MCF 10A (cell line): ENCODE measurements at regions of chr20 and their contacts with region 1.

Region 1: GRCh38 chr20:35741892-35742740 is at the start of gene RBM39:
- DNase-seq: peak; percentile 100
- H3K4me3 Mint-ChIP-seq: peak within 1 kb of the TSS; percentile 97
- H3K27ac Mint-ChIP-seq: peak within 1 kb of the TSS; percentile 98
- H3K4me1 Mint-ChIP-seq: peaks cover 23% of the 10 kb centered on the region
- H3K27me3 Mint-ChIP-seq: no peaks in the 10 kb centered on the region
- CTCF ChIP-seq: peak; percentile 14
- total RNA-seq, gene RBM39: 380 and 438 TPM in 2 replicates

Region 2: GRCh38 chr20:34643919-34644318 is 1098.2 kb before region 1 on chr20:
- CTCF ChIA-PET with region 1: no interaction called
- POLR2A ChIA-PET with region 1: no interaction called
- intact Hi-C with region 1: no loop called
- DNase-seq: peak; percentile 68
- H3K4me3 Mint-ChIP-seq: no peak overlapping the region
- H3K27ac Mint-ChIP-seq: no peak overlapping the region
- H3K4me1 Mint-ChIP-seq: peaks cover 5% of the 10 kb centered on the region
- H3K27me3 Mint-ChIP-seq: no peaks in the 10 kb centered on the region
- CTCF ChIP-seq: no peak

Region 3: GRCh38 chr20:35699127-35699975 is 42.8 kb before region 1 on chr20 and contains the starts of genes NFS1 and ROMO1:
- CTCF ChIA-PET with region 1: no interaction called
- POLR2A ChIA-PET with region 1: interaction called, 266 read pairs
- intact Hi-C with region 1: no loop called
- DNase-seq: peak; percentile 85
- H3K4me3 Mint-ChIP-seq: peak within 1 kb of the TSS; percentile 98
- H3K27ac Mint-ChIP-seq: peak within 1 kb of the TSS; percentile 99
- H3K4me1 Mint-ChIP-seq: peaks cover 19% of the 10 kb centered on the region
- H3K27me3 Mint-ChIP-seq: no peaks in the 10 kb centered on the region
- CTCF ChIP-seq: no peak
- total RNA-seq, gene NFS1: 27.6 and 28.6 TPM in 2 replicates
- total RNA-seq, gene ROMO1: 173 and 192 TPM in 2 replicates

Region 4: GRCh38 chr20:35726759-35727711 is 15.1 kb before region 1 on chr20:
- CTCF ChIA-PET with region 1: interaction called, 5 read pairs
- POLR2A ChIA-PET with region 1: interaction called, 39 read pairs
- intact Hi-C with region 1: no loop called
- DNase-seq: no peak
- H3K4me3 Mint-ChIP-seq: no peak overlapping the region
- H3K27ac Mint-ChIP-seq: no peak overlapping the region
- H3K4me1 Mint-ChIP-seq: peaks cover 12% of the 10 kb centered on the region
- H3K27me3 Mint-ChIP-seq: no peaks in the 10 kb centered on the region
- CTCF ChIP-seq: no peak

Region 5: GRCh38 chr20:35820715-35821114 is 78.6 kb after region 1 on chr20:
- CTCF ChIA-PET with region 1: interaction called, 3 read pairs
- POLR2A ChIA-PET with region 1: interaction called, 21 read pairs
- intact Hi-C with region 1: no loop called
- DNase-seq: peak; percentile 37
- H3K4me3 Mint-ChIP-seq: no peak overlapping the region
- H3K27ac Mint-ChIP-seq: peak overlapping the region; percentile 0
- H3K4me1 Mint-ChIP-seq: peaks cover 30% of the 10 kb centered on the region
- H3K27me3 Mint-ChIP-seq: no peaks in the 10 kb centered on the region
- CTCF ChIP-seq: no peak

Region 6: DNA sequence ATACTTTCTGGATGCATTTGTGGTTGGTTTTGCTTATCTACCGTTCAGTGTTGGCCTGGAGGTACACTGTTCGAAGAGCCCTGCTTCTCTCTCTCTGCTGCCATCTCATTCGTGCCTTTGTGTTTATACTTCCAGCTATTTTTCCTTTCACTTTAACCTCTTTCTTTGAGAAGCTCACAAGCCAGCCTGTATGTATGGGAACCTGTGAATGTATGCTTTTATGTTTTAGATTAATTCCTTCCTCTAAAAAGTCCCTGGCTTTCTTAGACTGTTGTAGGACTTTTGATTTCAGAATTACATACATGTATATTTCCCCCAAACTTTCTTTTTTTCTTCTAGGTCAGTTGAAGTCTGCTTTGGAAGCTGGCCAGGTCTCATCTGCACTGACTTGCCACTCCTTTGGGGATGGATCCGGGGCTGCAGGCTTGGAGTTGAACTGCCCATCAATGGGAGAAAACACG is 129.2 kb after region 1 on chr20:
- CTCF ChIA-PET with region 1: interaction called, 6 read pairs
- POLR2A ChIA-PET with region 1: interaction called, 116 read pairs
- intact Hi-C with region 1: loop called (anchors 1 kb)
- DNase-seq: peak; percentile 76
- H3K4me3 Mint-ChIP-seq: peak overlapping the region; percentile 67
- H3K27ac Mint-ChIP-seq: peak overlapping the region; percentile 95
- H3K4me1 Mint-ChIP-seq: peaks cover 40% of the 10 kb centered on the region
- H3K27me3 Mint-ChIP-seq: no peaks in the 10 kb centered on the region
- CTCF ChIP-seq: no peak

Region 7: DNA sequence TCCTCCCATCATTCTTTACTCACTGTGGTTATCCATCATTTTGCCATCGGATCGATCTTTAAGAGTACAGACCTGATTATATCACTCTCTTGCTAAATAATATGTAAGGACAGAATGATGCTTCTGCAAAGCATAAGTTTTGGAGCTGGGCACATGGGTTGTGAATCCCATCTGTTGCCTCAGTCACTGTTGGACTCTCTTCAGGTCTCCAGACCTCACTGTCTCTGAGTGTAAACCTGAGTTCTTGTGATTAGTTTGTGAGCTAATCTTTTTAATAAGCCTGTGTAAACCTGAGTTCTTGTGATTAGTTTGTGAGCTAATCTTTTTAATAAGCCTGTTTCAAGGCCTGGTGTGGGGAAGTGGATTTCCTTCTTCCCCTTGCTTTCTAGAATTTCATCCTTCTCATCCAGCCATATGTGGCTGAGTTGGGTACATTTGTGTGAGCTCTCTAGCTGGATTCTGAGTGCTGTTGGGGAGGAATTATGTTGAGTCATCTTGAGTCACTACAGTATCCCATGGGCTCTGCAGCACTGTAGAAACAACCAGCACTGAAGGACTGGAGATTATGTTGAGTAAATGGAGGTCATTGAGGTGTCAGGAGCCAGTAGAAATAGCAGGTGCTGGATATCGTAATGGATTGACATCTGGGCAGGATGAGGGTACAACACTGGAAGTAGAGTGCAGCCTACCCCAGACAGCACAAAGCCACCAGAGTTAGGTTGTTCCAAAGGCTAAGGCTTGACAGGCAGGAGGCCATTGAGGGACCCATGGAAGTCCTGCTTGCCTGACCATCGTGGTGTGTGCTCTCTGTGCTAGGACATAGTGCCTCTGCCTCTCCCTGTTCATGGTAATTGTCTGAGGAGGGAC is 159.8 kb after region 1 on chr20:
- CTCF ChIA-PET with region 1: no interaction called
- POLR2A ChIA-PET with region 1: interaction called, 13 read pairs
- intact Hi-C with region 1: no loop called
- DNase-seq: peak; percentile 78
- H3K4me3 Mint-ChIP-seq: no peak overlapping the region
- H3K27ac Mint-ChIP-seq: peak overlapping the region; percentile 37
- H3K4me1 Mint-ChIP-seq: peaks cover 16% of the 10 kb centered on the region
- H3K27me3 Mint-ChIP-seq: no peaks in the 10 kb centered on the region
- CTCF ChIP-seq: no peak